IMR-90 (cell line): ENCODE measurements at regions of chr4 and their contacts with region 1.

Region 1: DNA sequence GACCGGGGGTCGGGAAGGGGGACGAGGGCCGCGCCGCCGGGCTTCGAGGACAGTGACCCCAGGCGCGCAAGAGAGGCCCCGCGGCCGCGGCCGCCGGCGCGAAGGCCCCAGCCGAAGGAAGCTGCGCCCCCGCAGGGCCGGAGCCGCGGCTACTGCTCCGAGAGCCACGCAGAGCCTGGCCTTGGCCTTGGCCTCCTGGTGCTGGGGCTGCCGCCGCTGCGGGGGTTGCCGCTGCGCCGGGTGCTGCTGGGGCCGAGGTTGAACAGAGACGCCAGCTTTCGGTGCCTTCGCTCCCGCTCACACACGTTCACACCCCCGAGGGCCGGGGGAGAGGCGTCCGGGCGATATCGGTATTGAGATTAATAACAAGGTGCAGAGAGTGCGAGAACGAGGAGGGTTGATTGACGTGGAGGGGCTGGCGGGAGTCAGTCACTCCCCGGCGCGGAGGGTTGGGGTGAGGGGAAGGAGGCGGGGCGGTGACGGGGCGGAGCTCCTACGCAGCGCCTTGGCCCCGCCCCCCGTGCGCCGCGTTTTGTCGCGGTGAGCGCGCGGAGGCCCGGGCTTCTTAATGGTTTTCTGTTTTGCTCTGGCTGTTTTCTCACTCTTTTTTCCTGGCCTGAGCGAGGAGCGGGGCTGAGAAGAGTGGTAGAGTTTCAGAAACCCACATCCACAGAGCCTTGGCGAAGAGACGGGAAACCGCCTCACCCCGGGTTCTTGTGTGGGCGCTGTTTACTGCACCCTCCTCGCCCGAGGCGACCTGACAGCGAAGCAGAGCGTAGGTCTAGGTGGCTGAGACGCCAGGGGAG is 878 bp upstream of the CNOT6L start:
- DNase-seq: peak; percentile 70
- ATAC-seq: peak; percentile 83
- H3K4me3 ChIP-seq: peak overlapping the region; percentile 94
- H3K27ac ChIP-seq: peak overlapping the region; percentile 86
- H3K4me1 ChIP-seq: peaks cover 2% of the 10 kb centered on the region
- H3K27me3 ChIP-seq: no peaks in the 10 kb centered on the region
- CTCF ChIP-seq: no peak
- POLR2A ChIP-seq: peak; percentile 53; the same call in 1 of the 2 replicates
- RAD21 ChIP-seq: no peak

Region 2: DNA sequence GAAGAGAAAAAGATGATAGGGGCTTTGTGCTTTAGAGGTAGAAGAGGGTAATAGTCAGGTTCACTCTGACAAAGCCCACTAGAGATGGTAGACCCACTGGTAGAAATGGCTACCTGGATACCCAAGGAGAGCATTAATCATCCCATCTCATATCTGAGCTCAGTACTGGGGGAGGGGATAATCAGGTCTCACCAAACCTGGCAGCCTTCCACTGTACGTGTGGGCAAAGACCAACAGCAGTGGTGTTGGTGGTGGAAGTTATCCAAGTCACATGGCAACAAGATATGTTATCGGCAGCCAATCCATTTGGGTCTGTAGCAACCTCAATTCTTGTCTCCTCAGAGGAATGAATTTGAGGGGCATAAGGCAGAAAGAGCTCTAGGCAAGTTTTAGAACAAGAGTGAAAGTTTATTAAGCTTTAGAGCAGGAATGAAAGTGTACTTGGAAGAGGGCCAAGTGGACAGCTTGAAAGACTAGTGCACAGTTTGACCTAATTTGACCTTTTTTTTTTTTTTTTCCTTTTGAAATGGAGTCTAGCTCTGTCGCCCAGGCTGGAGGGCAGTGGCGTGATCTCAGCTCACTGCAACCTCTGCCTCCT is 281.4 kb before region 1 on chr4:
- CTCF ChIA-PET with region 1: no interaction called
- POLR2A ChIA-PET with region 1: no interaction called
- dilution Hi-C with region 1: no loop called
- in situ Hi-C with region 1: no loop called
- intact Hi-C with region 1: no loop called
- DNase-seq: no peak
- ATAC-seq: no peak
- H3K4me3 ChIP-seq: no peak overlapping the region
- H3K27ac ChIP-seq: no peak overlapping the region
- H3K4me1 ChIP-seq: no peaks in the 10 kb centered on the region
- H3K27me3 ChIP-seq: no peaks in the 10 kb centered on the region
- CTCF ChIP-seq: no peak
- POLR2A ChIP-seq: no peak
- RAD21 ChIP-seq: no peak

Region 3: GRCh38 chr4:77618383-77619122 is 201.5 kb before region 1 on chr4:
- CTCF ChIA-PET with region 1: no interaction called
- POLR2A ChIA-PET with region 1: no interaction called
- dilution Hi-C with region 1: no loop called
- in situ Hi-C with region 1: no loop called
- intact Hi-C with region 1: loop called (anchors 5 kb)
- DNase-seq: peak; percentile 58
- ATAC-seq: peak; percentile 99
- H3K4me3 ChIP-seq: no peak overlapping the region
- H3K27ac ChIP-seq: no peak overlapping the region
- H3K4me1 ChIP-seq: no peaks in the 10 kb centered on the region
- H3K27me3 ChIP-seq: peaks cover 20% of the 10 kb centered on the region
- CTCF ChIP-seq: peak; percentile 69
- POLR2A ChIP-seq: no peak
- RAD21 ChIP-seq: peak; percentile 62

Region 4: GRCh38 chr4:77777135-77777807 is 42.8 kb before region 1 on chr4:
- CTCF ChIA-PET with region 1: interaction called, 3 read pairs
- POLR2A ChIA-PET with region 1: no interaction called
- dilution Hi-C with region 1: no loop called
- in situ Hi-C with region 1: no loop called
- intact Hi-C with region 1: loop called (anchors 5 kb)
- DNase-seq: peak; percentile 9
- ATAC-seq: peak; percentile 16; the same call in 1 of the 2 replicates
- H3K4me3 ChIP-seq: no peak overlapping the region
- H3K27ac ChIP-seq: no peak overlapping the region
- H3K4me1 ChIP-seq: peaks cover 6% of the 10 kb centered on the region
- H3K27me3 ChIP-seq: no peaks in the 10 kb centered on the region
- CTCF ChIP-seq: no peak
- POLR2A ChIP-seq: no peak
- RAD21 ChIP-seq: no peak

Region 5: GRCh38 chr4:77862478-77863216 is 42.6 kb after region 1 on chr4 and contains the start of gene MRPL1:
- CTCF ChIA-PET with region 1: no interaction called
- POLR2A ChIA-PET with region 1: interaction called, 3 read pairs
- dilution Hi-C with region 1: no loop called
- in situ Hi-C with region 1: no loop called
- intact Hi-C with region 1: loop called (anchors 1 kb)
- DNase-seq: peak; percentile 96
- ATAC-seq: peak; percentile 98
- H3K4me3 ChIP-seq: peak within 1 kb of the TSS; percentile 66
- H3K27ac ChIP-seq: peak within 1 kb of the TSS; percentile 81
- H3K4me1 ChIP-seq: peaks cover 1% of the 10 kb centered on the region; the same call in 1 of the 2 replicates
- H3K27me3 ChIP-seq: no peaks in the 10 kb centered on the region
- CTCF ChIP-seq: no peak
- POLR2A ChIP-seq: peak; percentile 94
- RAD21 ChIP-seq: no peak
- total RNA-seq, gene MRPL1: 13.4 and 33.6 TPM in 2 replicates

Region 6: DNA sequence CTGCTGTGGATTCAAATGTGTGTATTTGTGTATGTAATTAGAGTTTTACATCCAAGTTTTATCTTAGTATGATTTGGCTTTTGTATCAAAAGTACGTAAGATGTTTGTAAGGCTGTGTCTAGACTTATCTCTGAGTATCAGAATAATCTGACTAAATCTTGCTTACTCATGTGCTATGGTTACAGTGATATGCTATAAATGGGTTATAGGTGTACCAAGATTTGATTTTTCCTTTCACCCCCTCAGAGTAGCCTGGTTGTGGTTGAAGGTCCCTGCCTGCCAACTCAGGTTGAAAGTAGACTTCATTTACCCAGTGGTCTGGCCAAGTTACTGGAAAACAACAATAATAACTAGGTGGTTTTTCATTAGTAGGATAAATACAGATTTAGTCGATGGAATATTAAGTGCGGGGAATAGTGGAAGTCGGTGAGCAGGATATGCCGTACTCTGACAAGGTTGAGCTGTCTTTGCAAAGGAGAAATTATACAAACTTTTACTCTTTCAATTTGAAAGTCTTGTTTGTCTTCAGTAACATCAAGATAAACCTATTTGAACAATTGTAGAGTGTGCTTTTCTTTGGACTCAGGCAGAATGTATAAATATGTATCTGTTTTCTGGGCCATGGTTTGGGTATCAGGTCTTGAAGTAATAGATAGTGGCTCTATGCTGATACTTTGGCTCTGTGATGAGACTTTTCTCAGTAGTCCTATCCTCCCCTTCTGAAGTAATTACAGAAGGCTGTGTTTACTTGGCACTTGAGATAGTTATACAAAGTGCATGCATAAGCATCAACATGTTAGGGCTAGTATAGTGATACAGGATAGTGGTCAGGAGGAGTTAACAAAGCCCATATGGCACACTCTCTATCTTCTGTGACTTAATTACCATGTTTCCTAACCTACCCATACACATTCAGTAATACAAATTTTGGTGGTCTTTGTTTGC is 979.8 kb after region 1 on chr4:
- CTCF ChIA-PET with region 1: no interaction called
- POLR2A ChIA-PET with region 1: no interaction called
- dilution Hi-C with region 1: no loop called
- in situ Hi-C with region 1: no loop called
- intact Hi-C with region 1: no loop called
- DNase-seq: no peak
- ATAC-seq: peak; percentile 72
- H3K4me3 ChIP-seq: no peak overlapping the region
- H3K27ac ChIP-seq: no peak overlapping the region
- H3K4me1 ChIP-seq: 0 out of 2 replicates have a peak, but pooled peaks cover 2% of the 10 kb centered on the region
- H3K27me3 ChIP-seq: no peaks in the 10 kb centered on the region
- CTCF ChIP-seq: no peak
- POLR2A ChIP-seq: no peak
- RAD21 ChIP-seq: no peak